Panc1 (cell line): ENCODE measurements at regions of chr5 and their contacts with region 1.

Region 1: GRCh38 chr5:51398875-51399642 is 15.8 kb downstream of the ISL1 start:
- DNase-seq: no peak
- ATAC-seq: no peak
- H3K4me3 ChIP-seq: no peak overlapping the region
- H3K27ac ChIP-seq: no peak overlapping the region
- H3K4me1 ChIP-seq: no peaks in the 10 kb centered on the region
- H3K27me3 ChIP-seq: peaks cover 7% of the 10 kb centered on the region
- CTCF ChIP-seq: no peak

Region 2: DNA sequence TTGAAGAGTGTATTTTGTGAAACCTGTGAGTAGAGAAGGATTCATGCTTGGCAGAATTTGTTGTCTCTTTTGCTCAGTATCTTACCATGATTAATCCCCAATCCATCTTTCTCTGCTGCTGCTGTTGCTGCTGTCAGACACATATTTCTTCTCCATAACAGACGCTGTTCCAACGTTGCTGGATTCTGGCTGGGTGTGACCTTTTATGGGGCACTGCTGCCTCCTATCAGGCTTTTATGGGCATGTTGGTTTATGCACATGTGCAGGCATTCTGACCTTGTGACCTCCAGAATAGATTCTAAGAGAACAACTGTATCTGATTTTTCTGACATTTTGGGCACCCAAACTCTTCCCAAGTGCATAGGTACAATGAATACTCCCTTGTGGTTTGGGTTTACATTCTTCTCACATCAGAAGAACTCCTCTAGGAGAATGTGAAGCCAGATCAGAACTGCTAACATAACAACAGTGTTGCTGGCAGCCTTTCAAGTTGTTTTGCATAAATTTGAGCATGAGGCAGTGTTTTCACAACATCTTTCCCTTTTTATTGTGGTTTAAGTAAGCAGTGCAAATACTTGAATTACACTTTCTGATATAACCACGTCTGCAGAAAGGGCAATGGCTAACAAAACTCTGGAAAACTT is 25.1 kb before region 1 on chr5:
- CTCF ChIA-PET with region 1: no interaction called
- POLR2A ChIA-PET with region 1: interaction called, 10 read pairs
- in situ Hi-C with region 1: no loop called
- intact Hi-C with region 1: no loop called
- DNase-seq: no peak
- ATAC-seq: no peak
- H3K4me3 ChIP-seq: no peak overlapping the region
- H3K27ac ChIP-seq: no peak overlapping the region
- H3K4me1 ChIP-seq: peaks cover 4% of the 10 kb centered on the region; the same call in 1 of the 2 replicates
- H3K27me3 ChIP-seq: peaks cover 20% of the 10 kb centered on the region
- CTCF ChIP-seq: no peak

Region 3: GRCh38 chr5:51669095-51669494 is 270.0 kb after region 1 on chr5:
- CTCF ChIA-PET with region 1: no interaction called
- POLR2A ChIA-PET with region 1: no interaction called
- in situ Hi-C with region 1: no loop called
- intact Hi-C with region 1: no loop called
- DNase-seq: no peak
- ATAC-seq: no peak
- H3K4me3 ChIP-seq: no peak overlapping the region
- H3K27ac ChIP-seq: no peak overlapping the region
- H3K4me1 ChIP-seq: no peaks in the 10 kb centered on the region
- H3K27me3 ChIP-seq: no peaks in the 10 kb centered on the region
- CTCF ChIP-seq: no peak